Naive thymus-derived CD4-positive, alpha-beta T cell (primary cell): ENCODE measurements at regions of chr9 and their contacts with region 1.

Region 1: GRCh38 chr9:101398068-101398929 is at the starts of genes MRPL50 and ZNF189:
- DNase-seq: peak; percentile 81 to 99 (median 96)
- ATAC-seq: peak; percentile 97
- H3K4me3 ChIP-seq: peak within 1 kb of the TSS; percentile 90
- H3K4me3 Mint-ChIP-seq: peak within 1 kb of the TSS; percentile 93 to 100 (median 98)
- H3K27ac ChIP-seq: peak within 1 kb of the TSS; percentile 94
- H3K27ac Mint-ChIP-seq: peak within 1 kb of the TSS; percentile 97 to 100 (median 99)
- H3K4me1 ChIP-seq: peaks cover 21 to 34% of the 10 kb centered on the region in 2 donors
- H3K4me1 Mint-ChIP-seq: peaks cover 53 to 90% (median 83%) of the 10 kb centered on the region in 7 donors
- H3K27me3 ChIP-seq: no peaks in the 10 kb centered on the region
- H3K27me3 Mint-ChIP-seq: no peaks in the 10 kb centered on the region
- total RNA-seq, gene MRPL50: 6.5 to 23.8 (median 11.5) TPM
- total RNA-seq, gene ZNF189: 8.5 to 25.0 (median 14.5) TPM

Region 2: GRCh38 chr9:100098887-100099721 is 1299.2 kb before region 1 on chr9 and contains the starts of genes ERP44 and INVS:
- CTCF ChIA-PET with region 1: no interaction called
- POLR2A ChIA-PET with region 1: no interaction called
- intact Hi-C with region 1: loop called in 1 of 2 experiments (anchors 5 kb)
- DNase-seq: peak; percentile 82 to 98 (median 94)
- ATAC-seq: peak; percentile 99
- H3K4me3 ChIP-seq: peak within 1 kb of the TSS; percentile 93
- H3K4me3 Mint-ChIP-seq: peak within 1 kb of the TSS; percentile 94 to 100 (median 98)
- H3K27ac ChIP-seq: peak within 1 kb of the TSS; percentile 89
- H3K27ac Mint-ChIP-seq: peak within 1 kb of the TSS; percentile 84 to 99 (median 97)
- H3K4me1 ChIP-seq: peaks cover 18 to 25% of the 10 kb centered on the region in 2 donors
- H3K4me1 Mint-ChIP-seq: peaks cover 26 to 53% (median 43%) of the 10 kb centered on the region in 7 donors
- H3K27me3 ChIP-seq: no peaks in the 10 kb centered on the region
- H3K27me3 Mint-ChIP-seq: no peaks in the 10 kb centered on the region
- total RNA-seq, gene ERP44: 9.8 to 19.5 (median 15.2) TPM
- total RNA-seq, gene INVS: 15.0 to 20.8 (median 20.6) TPM

Region 3: GRCh38 chr9:100411472-100412283 is 986.6 kb before region 1 on chr9:
- CTCF ChIA-PET with region 1: no interaction called
- POLR2A ChIA-PET with region 1: no interaction called
- intact Hi-C with region 1: loop called in 1 of 2 experiments (anchors 5 kb)
- DNase-seq: peak; percentile 58 to 87 (median 80)
- ATAC-seq: peak; percentile 100
- H3K4me3 ChIP-seq: peak overlapping the region; percentile 91
- H3K4me3 Mint-ChIP-seq: peak overlapping the region; percentile 83 to 98 (median 89)
- H3K27ac ChIP-seq: peak overlapping the region; percentile 55
- H3K27ac Mint-ChIP-seq: peak overlapping the region; percentile 56 to 90 (median 84)
- H3K4me1 ChIP-seq: peaks cover 10 to 15% of the 10 kb centered on the region in 2 donors
- H3K4me1 Mint-ChIP-seq: peaks cover 10 to 16% (median 13%) of the 10 kb centered on the region in 7 donors
- H3K27me3 ChIP-seq: no peaks in the 10 kb centered on the region
- H3K27me3 Mint-ChIP-seq: peaks cover 6 to 21% (median 15%) of the 10 kb centered on the region in 5 donors

Region 4: DNA sequence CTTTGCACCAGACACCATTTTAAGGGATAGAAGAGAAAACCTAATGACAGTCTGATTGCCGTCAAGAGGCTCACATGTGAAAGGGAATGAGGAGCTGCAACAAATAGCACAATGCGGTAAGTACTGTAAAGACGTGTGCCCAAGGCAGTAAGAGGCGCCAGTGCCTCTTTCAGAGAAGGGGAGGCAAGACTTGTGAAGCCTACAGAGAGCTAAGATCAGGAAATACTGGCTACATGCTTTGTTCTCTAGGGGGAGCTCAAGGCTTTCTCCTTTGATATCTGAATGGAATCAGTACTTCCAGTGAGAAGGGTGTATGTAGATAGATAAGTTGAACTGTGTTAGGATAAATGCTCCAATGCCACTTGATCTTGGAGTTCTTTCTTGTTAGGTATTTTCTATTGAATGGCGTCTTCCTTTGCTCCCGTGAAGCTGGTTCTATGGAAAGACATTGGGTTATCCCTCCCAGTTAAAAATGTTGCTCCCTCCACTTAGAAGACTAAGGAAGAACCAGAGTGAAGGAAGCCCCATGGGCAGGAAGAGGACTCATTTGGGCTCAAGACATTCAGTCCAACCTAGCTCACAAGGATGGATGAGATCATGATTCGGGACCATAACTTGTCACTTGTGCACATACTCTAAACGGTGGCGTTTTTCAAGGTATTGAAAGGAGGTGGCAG is 60.8 kb after region 1 on chr9:
- CTCF ChIA-PET with region 1: no interaction called
- POLR2A ChIA-PET with region 1: no interaction called
- intact Hi-C with region 1: loop called in 1 of 2 experiments (anchors 10 kb)
- DNase-seq: peak in 7 of 9 donors; percentile 9 to 49 (median 27)
- ATAC-seq: peak; percentile 84
- H3K4me3 ChIP-seq: no peak overlapping the region
- H3K4me3 Mint-ChIP-seq: no peak overlapping the region
- H3K27ac ChIP-seq: no peak overlapping the region
- H3K27ac Mint-ChIP-seq: no peak overlapping the region
- H3K4me1 ChIP-seq: no peaks in the 10 kb centered on the region
- H3K4me1 Mint-ChIP-seq: peaks cover 0 to 2% (median 0%) of the 10 kb centered on the region in 7 donors
- H3K27me3 ChIP-seq: no peaks in the 10 kb centered on the region
- H3K27me3 Mint-ChIP-seq: peaks cover 8 to 26% (median 17%) of the 10 kb centered on the region in 5 donors

Region 5: DNA sequence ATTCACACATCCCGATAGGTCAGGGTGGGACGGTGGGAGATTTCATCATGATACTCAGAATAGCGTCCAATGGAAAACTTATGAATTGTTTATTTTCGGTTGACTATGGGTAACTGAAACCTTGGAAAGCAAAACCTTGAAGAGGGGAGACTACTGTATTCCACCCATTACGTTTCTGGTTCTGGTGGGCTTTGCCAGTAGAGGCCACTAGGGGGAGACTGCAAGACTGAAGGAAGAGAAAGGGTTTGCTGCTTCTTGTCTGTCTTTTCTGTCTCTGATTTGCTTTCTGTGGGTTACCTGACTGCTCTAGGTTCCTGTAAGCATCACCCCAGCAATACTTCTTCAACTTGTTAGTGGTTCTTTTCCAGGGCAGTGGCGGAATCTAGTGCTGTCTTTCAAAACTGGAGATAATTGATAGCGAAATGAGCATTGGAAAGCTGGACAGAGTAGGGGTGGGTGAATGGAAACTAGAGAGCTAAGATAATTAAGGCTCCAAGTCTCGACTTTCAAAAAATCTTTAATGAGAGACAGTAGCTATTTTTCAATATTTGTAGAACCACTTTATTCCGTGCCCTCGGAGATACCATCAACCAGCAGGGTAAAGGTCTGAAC is 313.1 kb after region 1 on chr9:
- CTCF ChIA-PET with region 1: no interaction called
- POLR2A ChIA-PET with region 1: no interaction called
- intact Hi-C with region 1: loop called in 1 of 2 experiments (anchors 5 kb)
- DNase-seq: peak in 3 of 9 donors; percentile 8 to 19 (median 17)
- ATAC-seq: no peak
- H3K4me3 ChIP-seq: no peak overlapping the region
- H3K4me3 Mint-ChIP-seq: no peak overlapping the region
- H3K27ac ChIP-seq: no peak overlapping the region
- H3K27ac Mint-ChIP-seq: no peak overlapping the region
- H3K4me1 ChIP-seq: no peaks in the 10 kb centered on the region
- H3K4me1 Mint-ChIP-seq: peaks cover 0 to 5% (median 0%) of the 10 kb centered on the region in 7 donors
- H3K27me3 ChIP-seq: no peaks in the 10 kb centered on the region
- H3K27me3 Mint-ChIP-seq: peaks cover 4 to 29% (median 22%) of the 10 kb centered on the region in 5 donors